Heart right ventricle (tissue), 16 donors: ENCODE measurements at regions of chr3 and their contacts with region 1.

Region 1: GRCh38 chr3:119598410-119599098 is 869 bp downstream of the PLA1A start:
- DNase-seq: no peak
- ATAC-seq: no peak
- H3K4me3 ChIP-seq: no peak overlapping the region
- H3K27ac ChIP-seq: peak overlapping the region in 9 of 10 donors; percentile 65 to 90 (median 77)
- H3K4me1 ChIP-seq: peaks cover 6 to 77% (median 56%) of the 10 kb centered on the region in 9 donors
- H3K27me3 ChIP-seq: no peaks in the 10 kb centered on the region
- CTCF ChIP-seq: no peak

Region 2: DNA sequence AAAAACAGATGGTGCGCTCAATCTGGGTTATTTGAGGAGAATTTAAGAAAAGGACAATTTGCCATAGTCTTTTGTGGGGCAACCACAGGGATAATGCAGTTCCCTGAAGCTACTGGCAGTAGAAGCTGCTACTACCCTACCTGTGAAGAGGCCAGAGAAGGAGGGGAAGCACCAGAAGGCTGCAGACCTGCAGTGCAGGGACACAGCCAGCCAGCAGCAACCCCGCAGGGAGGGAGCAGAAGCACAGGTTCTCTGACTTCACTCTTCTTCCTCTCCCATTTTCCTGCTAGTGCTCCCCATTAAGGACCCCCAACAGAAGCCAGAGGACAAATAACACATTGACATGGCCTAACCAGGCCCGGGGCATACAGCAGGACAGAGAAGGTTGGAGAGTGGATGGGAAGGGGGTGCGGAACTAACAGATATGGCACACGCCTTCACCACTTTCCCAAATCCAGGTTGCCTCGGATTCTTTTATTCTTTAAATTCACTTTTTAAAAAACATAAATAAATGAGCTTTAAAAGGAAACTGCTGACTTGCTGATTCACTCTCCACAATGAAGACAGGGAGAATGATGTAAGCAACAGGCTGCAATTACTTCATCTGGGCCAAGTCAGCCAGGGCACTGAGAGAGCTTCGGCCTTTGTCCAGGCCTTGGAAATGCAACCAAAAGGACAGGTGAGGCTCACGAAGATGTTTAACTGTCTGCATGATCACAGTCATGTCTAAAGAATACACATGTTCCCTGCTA is 31.8 kb after region 1 on chr3:
- intact Hi-C with region 1: loop called in 5 of 10 experiments (anchors 5 kb)
- DNase-seq: no peak
- ATAC-seq: peak in 6 of 8 donors; percentile 36 to 58 (median 47)
- H3K4me3 ChIP-seq: no peak overlapping the region
- H3K27ac ChIP-seq: peak overlapping the region in 9 of 10 donors; percentile 33 to 84 (median 69)
- H3K4me1 ChIP-seq: peaks cover 3 to 76% (median 65%) of the 10 kb centered on the region in 9 donors
- H3K27me3 ChIP-seq: no peaks in the 10 kb centered on the region
- CTCF ChIP-seq: no peak

Region 3: GRCh38 chr3:119637679-119638525 is 39.3 kb after region 1 on chr3:
- intact Hi-C with region 1: loop called in 5 of 10 experiments (anchors 5 kb)
- DNase-seq: no peak
- ATAC-seq: peak; percentile 25 to 76 (median 51)
- H3K4me3 ChIP-seq: peak overlapping the region in 4 of 10 donors; percentile 4 to 14 (median 10)
- H3K27ac ChIP-seq: peak overlapping the region; percentile 71 to 94 (median 88)
- H3K4me1 ChIP-seq: peaks cover 12 to 68% (median 56%) of the 10 kb centered on the region in 9 donors
- H3K27me3 ChIP-seq: no peaks in the 10 kb centered on the region
- CTCF ChIP-seq: no peak

Region 4: DNA sequence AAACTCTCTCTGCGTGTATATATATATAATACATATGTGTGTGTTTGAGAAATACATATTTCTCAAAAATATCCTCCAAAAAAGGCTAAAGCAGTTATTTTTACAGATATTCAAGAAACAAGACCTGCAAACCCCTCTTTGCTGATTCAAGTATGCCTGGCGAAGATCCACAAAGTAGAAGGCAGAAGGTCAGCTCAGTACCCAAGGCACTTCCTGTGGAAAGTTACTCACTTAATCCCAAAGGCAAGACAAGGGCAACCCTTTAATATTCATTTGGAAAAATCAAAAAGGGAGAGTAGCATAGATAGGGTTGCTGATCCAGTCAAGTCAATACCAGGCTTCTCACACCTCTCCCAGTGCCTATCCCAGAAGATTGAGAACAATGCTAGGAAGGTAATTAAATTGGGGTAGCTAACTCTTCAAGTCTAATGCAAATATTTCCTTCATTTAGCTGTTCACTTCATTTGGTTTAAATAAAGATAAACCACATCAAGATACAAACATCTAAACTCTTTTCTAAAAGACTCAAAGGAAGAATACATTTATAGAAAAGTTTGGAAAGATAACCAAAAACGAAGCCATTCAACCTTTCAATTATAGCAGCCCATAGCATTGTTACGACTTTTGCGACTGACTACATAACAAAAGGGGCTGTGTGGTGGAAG is 71.5 kb after region 1 on chr3:
- intact Hi-C with region 1: loop called in 3 of 10 experiments (anchors 5 to 10 kb)
- DNase-seq: no peak
- ATAC-seq: peak in 1 of 8 donors; percentile 8
- H3K4me3 ChIP-seq: no peak overlapping the region
- H3K27ac ChIP-seq: peak overlapping the region in 9 of 10 donors; percentile 33 to 98 (median 58)
- H3K4me1 ChIP-seq: peaks cover 3 to 57% (median 35%) of the 10 kb centered on the region in 9 donors
- H3K27me3 ChIP-seq: no peaks in the 10 kb centered on the region
- CTCF ChIP-seq: no peak